Activated B cell treated with CpG ODN at 0.5 μM for 24 hours (primary cell): ENCODE measurements at regions of chr9 and their contacts with region 1.

Region 1: GRCh38 chr9:130712564-130713285 is 19.1 kb downstream of the EXOSC2 start:
- DNase-seq: peak; percentile 92
- ATAC-seq: peak; percentile 97
- H3K4me3 Mint-ChIP-seq: peak overlapping the region; percentile 90
- H3K27ac Mint-ChIP-seq: peak overlapping the region; percentile 88
- H3K4me1 Mint-ChIP-seq: peaks cover 34% of the 10 kb centered on the region
- H3K27me3 Mint-ChIP-seq: no peaks in the 10 kb centered on the region
- CTCF ChIP-seq: no peak

Region 2: DNA sequence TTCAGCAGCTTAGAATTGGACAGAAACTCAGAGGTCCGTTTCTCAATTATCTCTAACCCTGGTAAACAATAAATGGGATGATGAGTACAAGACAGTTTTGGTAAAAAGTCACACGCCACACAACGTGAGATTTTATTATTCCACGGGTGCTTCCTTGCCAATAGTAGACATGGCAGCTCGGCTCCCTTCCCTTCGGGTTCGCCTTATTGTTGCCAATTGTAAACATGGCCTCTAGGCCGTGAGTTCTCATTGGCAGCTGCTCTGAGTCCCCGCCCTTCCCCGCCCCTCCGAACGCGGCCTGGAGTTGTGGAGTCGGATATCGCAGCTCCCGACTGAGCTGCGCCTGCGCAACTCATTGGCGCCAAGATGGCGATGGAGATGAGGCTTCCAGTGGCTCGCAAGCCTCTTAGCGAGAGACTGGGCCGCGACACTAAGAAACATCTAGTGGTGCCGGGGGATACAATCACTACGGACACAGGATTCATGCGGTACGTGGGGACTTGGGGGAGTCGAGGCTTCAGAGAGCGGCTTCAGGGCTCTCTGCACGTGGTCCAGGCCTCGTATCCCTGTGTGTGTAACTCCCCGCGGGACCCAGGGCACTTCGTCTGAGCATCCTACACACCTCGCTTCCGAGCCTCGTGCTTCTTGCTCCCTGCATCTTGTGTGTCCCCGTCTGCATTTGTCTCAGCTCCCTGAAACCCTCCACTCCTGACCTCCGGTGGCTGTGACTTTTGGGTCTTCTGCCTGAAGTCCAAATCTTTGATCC is 19.1 kb before region 1 on chr9 and contains the start of gene EXOSC2:
- CTCF ChIA-PET with region 1: interaction called, 6 read pairs
- POLR2A ChIA-PET with region 1: interaction called, 9 read pairs
- intact Hi-C with region 1: loop called (anchors 1 kb)
- DNase-seq: peak; percentile 79
- ATAC-seq: peak; percentile 99
- H3K4me3 Mint-ChIP-seq: peak within 1 kb of the TSS; percentile 94
- H3K27ac Mint-ChIP-seq: peak within 1 kb of the TSS; percentile 93
- H3K4me1 Mint-ChIP-seq: peaks cover 30% of the 10 kb centered on the region
- H3K27me3 Mint-ChIP-seq: no peaks in the 10 kb centered on the region
- CTCF ChIP-seq: no peak
- total RNA-seq, gene EXOSC2: 49.6 and 54.8 TPM in 2 replicates

Region 3: DNA sequence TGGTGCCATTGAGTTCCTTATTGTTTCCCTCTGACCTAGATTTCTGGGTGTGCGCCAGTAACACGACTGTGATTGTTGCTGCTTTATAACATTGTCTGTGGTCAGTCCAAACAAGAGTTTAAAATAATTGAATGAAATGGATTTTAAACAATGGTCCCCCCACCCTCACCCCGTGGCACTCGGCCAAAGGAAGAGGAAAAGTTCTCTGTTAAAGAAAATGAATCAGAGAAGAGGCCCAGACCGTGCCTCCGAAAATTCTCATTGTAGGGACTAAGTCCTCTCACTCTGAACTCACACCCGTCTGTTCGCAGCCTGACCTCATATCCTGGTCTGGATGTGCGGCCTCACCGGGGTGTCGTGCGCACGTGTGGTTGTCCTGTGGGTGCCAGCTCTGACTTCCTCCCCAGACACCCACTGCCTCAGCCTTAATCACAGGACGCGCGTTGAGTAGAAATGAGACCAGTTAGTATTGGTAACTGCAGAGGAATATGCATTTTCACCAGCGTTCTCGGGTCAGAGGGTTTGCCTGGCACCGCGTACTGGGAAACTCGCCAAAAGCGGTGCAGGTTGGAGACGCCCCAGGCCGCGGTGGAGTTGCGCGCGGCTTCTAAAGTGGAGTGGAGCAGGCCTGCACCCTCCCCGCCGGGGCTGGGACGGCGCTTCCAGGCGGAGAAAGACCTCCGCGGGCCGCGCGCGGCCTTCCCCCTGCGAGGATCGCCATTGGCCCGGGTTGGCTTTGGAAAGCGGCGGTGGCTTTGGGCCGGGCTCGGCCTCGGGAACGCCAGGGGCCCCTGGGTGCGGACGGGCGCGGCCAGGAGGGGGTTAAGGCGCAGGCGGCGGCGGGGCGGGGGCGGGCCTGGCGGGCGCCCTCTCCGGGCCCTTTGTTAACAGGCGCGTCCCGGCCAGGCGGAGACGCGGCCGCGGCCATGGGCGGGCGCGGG is 121.9 kb after region 1 on chr9 and contains the start of gene ABL1:
- CTCF ChIA-PET with region 1: no interaction called
- POLR2A ChIA-PET with region 1: no interaction called
- intact Hi-C with region 1: loop called (anchors 1 kb)
- DNase-seq: peak; percentile 55
- ATAC-seq: peak; percentile 83
- H3K4me3 Mint-ChIP-seq: peak within 1 kb of the TSS; percentile 94
- H3K27ac Mint-ChIP-seq: peak within 1 kb of the TSS; percentile 89
- H3K4me1 Mint-ChIP-seq: peaks cover 40% of the 10 kb centered on the region
- H3K27me3 Mint-ChIP-seq: no peaks in the 10 kb centered on the region
- CTCF ChIP-seq: no peak
- total RNA-seq, gene ABL1: 32.8 and 41.6 TPM in 2 replicates